Panc1 (cell line): ENCODE measurements at regions of chr4 and their contacts with region 1.

Region 1: GRCh38 chr4:3098346-3098745 is 23.9 kb downstream of the HTT start:
- DNase-seq: no peak
- ATAC-seq: no peak
- H3K4me3 ChIP-seq: no peak overlapping the region
- H3K27ac ChIP-seq: no peak overlapping the region
- H3K4me1 ChIP-seq: no peaks in the 10 kb centered on the region
- H3K27me3 ChIP-seq: no peaks in the 10 kb centered on the region
- CTCF ChIP-seq: no peak

Region 2: DNA sequence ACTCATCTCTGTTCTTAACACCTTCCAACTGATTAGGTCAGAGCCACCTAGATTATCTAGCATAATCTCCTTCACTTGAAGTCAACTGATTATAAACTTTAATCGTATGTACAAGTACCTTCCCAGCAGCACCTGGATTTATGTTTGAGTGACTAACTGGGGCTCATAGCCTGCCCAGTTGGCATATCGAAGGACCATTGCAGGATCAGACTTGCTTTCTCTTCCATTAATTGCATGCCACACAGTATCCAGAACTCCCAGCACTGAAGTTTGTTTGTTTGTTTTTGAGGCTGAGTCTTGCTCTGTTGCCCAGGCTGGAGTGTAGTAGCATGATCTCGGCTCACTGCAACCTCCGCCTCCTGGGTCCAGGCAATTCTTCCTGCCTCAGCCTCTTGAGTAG is 107.1 kb before region 1 on chr4:
- CTCF ChIA-PET with region 1: no interaction called
- POLR2A ChIA-PET with region 1: interaction called, 10 read pairs
- in situ Hi-C with region 1: no loop called
- intact Hi-C with region 1: no loop called
- DNase-seq: no peak
- ATAC-seq: no peak
- H3K4me3 ChIP-seq: no peak overlapping the region
- H3K27ac ChIP-seq: no peak overlapping the region
- H3K4me1 ChIP-seq: no peaks in the 10 kb centered on the region
- H3K27me3 ChIP-seq: no peaks in the 10 kb centered on the region
- CTCF ChIP-seq: no peak

Region 3: DNA sequence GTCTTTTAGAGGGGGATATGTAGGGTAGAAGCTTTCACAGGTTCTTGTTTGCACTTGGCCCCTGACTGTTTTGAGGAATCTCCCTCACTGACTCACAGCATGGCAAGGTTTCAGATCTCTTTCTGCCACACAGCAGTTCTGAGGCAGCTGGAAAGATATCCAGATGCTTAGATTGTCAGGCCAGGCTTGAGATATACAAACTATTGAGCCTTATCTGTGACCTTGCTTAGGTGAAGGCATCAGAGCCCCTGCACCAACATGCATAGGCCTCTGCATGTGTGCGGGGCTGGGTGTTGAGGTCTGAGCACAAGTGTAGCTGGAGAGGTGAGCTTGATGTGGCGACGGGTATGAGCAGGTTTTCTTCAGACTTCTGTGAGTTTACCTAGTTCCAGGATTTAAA is 69.7 kb after region 1 on chr4:
- CTCF ChIA-PET with region 1: no interaction called
- POLR2A ChIA-PET with region 1: no interaction called
- in situ Hi-C with region 1: no loop called
- intact Hi-C with region 1: no loop called
- DNase-seq: no peak
- ATAC-seq: no peak
- H3K4me3 ChIP-seq: no peak overlapping the region
- H3K27ac ChIP-seq: no peak overlapping the region
- H3K4me1 ChIP-seq: no peaks in the 10 kb centered on the region
- H3K27me3 ChIP-seq: no peaks in the 10 kb centered on the region
- CTCF ChIP-seq: no peak